Activated CD4-positive, alpha-beta T cell treated with anti-CD3 and anti-CD28 coated beads, Interleukin-2, amount 10 ng/mL, durations not matched to agents 24 days and 14 days (primary cell): ENCODE measurements at regions of chr6 and their contacts with region 1.

Region 1: DNA sequence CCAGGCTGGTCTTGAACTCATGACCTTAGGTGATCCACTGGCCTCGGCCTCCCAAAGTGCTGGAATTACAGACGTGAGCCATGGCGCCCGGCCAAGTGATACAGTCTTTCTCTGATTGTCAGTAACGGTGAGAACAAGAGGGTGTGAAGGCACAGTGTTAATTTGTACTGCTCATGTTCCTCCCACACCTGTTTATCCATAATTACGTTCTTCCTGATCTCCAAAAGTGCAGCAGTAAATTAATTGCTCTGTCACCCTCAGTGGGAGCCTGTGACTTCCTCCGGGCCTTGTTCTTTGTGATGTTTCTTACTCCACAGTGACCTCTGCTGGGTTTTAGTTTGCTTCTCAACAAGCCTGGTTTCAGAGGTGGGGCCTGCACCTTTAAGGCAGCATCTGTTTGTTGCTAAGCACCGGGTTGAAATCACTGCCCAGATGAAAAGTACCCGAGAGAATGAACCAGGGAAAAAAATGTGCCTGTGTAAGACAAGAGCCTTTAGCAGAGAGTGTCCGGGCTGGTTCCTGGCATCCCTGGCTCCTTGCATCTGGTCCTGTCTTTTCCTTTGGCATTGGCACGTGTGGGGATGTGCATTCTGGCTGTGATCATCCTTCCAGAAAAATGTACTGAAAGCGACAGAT is 89.1 kb upstream of the CLDN20 start:
- DNase-seq: peak; percentile 92
- H3K4me3 Mint-ChIP-seq: peak overlapping the region; percentile 17
- H3K27ac Mint-ChIP-seq: peak overlapping the region; percentile 88
- H3K4me1 Mint-ChIP-seq: peaks cover 42% of the 10 kb centered on the region
- H3K27me3 Mint-ChIP-seq: peaks cover 2% of the 10 kb centered on the region

Region 2: GRCh38 chr6:154675602-154676088 is 499.0 kb before region 1 on chr6:
- intact Hi-C with region 1: loop called (anchors 2 kb)
- DNase-seq: peak; percentile 96
- H3K4me3 Mint-ChIP-seq: no peak overlapping the region
- H3K27ac Mint-ChIP-seq: no peak overlapping the region
- H3K4me1 Mint-ChIP-seq: no peaks in the 10 kb centered on the region
- H3K27me3 Mint-ChIP-seq: peaks cover 2% of the 10 kb centered on the region

Region 3: DNA sequence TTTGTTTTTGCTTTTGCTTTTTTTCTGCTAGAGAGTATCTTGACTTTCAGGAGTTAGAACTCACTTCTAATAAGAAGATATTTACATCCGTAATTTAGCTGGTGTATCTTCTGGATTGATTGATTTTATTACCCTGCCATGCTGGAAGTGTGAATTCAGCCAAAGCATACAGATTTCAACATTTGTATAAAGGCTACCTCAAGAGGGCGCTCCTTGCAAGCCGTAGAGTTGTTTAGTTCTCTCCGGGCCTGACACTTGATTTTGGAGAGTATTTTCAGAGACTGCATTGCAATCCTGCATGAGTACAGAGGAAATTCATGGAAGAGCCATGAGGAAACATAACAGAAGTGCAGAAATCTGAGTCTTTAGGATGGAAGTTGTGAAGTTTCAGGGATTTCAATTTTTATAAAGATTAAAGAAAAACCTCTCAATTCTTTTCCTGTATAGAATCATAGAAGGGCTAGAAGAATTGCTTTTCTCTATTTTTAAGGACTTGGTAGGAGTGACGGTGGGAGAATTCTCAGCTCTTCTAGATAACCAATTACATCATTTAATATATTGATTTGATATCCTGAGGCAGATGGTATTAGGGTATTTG is 246.3 kb before region 1 on chr6:
- intact Hi-C with region 1: loop called (anchors 1 kb)
- DNase-seq: peak; percentile 90
- H3K4me3 Mint-ChIP-seq: no peak overlapping the region
- H3K27ac Mint-ChIP-seq: peak overlapping the region; percentile 12
- H3K4me1 Mint-ChIP-seq: peaks cover 19% of the 10 kb centered on the region
- H3K27me3 Mint-ChIP-seq: no peaks in the 10 kb centered on the region

Region 4: GRCh38 chr6:155001482-155001881 is 173.2 kb before region 1 on chr6:
- intact Hi-C with region 1: no loop called
- DNase-seq: no peak
- H3K4me3 Mint-ChIP-seq: no peak overlapping the region
- H3K27ac Mint-ChIP-seq: no peak overlapping the region
- H3K4me1 Mint-ChIP-seq: peaks cover 12% of the 10 kb centered on the region
- H3K27me3 Mint-ChIP-seq: peaks cover 12% of the 10 kb centered on the region

Region 5: GRCh38 chr6:155079985-155080452 is 94.7 kb before region 1 on chr6:
- intact Hi-C with region 1: loop called (anchors 1 kb)
- DNase-seq: no peak
- H3K4me3 Mint-ChIP-seq: peak overlapping the region; percentile 22
- H3K27ac Mint-ChIP-seq: peak overlapping the region; percentile 85
- H3K4me1 Mint-ChIP-seq: peaks cover 31% of the 10 kb centered on the region
- H3K27me3 Mint-ChIP-seq: no peaks in the 10 kb centered on the region

Region 6: DNA sequence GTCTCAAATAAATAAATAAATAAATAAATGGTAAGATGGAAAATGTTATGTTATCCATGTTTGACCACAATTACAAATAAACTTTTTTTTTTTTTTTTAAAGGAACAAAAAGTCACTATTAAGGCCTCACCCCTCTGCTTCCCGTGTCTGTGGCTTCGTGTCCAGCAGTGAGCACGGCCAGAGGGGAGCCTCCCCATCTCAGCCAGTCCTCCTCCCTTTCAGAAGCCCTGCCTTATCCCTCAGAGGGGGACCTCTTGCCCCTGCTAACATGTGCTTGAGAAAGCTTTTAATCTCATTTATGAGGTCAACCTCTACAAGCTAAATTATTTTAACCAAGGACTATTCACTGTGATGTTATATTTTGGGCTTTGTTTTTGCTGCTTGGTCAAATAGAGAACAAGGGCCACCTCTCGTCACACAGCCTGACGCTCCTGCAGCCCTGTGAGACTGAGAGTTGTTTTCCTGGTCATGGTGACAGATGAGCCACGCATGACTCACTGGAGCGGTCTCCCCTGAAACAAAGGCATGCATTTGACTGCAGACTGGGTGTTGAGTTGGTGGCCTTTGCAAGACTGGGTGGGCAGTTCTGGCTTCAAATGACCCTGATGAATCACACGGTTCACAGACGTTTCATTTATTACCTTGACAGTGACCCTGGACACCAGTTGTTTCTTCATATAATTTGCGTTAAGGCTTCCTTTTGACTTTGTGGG is 47.8 kb before region 1 on chr6:
- intact Hi-C with region 1: loop called (anchors 1 kb)
- DNase-seq: peak; percentile 72
- H3K4me3 Mint-ChIP-seq: peak overlapping the region; percentile 68
- H3K27ac Mint-ChIP-seq: peak overlapping the region; percentile 97
- H3K4me1 Mint-ChIP-seq: peaks cover 51% of the 10 kb centered on the region
- H3K27me3 Mint-ChIP-seq: no peaks in the 10 kb centered on the region

Region 7: GRCh38 chr6:155141002-155141401 is 33.7 kb before region 1 on chr6:
- intact Hi-C with region 1: no loop called
- DNase-seq: no peak
- H3K4me3 Mint-ChIP-seq: no peak overlapping the region
- H3K27ac Mint-ChIP-seq: peak overlapping the region; percentile 10
- H3K4me1 Mint-ChIP-seq: peaks cover 38% of the 10 kb centered on the region
- H3K27me3 Mint-ChIP-seq: no peaks in the 10 kb centered on the region

Region 8: DNA sequence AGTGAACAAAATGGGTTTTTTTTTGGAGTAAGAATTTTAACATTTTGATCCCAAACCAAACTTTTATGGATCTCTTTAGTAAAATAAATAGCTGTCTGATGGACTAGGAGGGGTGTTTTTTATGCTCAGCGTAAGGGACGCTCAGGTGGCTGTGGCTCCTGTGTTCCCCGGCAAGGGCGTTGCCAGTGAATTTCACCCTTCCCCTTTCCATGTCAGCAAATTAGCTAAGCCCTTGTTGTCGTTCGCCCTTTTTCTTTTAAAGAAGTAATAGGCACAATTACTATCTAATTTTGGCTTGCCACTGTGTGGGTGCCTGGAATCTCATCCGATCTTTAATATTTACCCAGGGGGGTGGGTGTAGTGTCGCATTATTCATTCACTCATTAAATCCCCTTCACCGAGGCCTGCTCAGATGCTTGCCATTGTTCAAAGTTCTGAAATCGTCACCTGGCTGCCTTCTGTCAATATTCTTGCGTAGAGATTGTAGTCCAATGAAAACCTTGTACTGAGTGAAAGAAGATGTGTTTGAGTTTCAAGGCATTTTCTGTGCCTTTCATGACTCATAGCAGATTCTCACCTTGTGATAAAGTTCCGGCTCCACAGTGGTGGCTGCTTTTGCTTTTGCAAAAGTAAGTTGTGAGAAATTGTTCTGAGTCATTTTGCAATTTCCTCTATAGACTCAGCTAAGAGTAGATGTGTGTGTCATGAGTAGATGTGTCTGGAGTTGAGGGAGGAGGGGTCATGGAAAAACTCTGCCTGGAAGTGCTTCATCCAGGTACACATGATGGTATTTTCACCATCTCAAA is 49.2 kb after region 1 on chr6:
- intact Hi-C with region 1: loop called (anchors 1 kb)
- DNase-seq: peak; percentile 85
- H3K4me3 Mint-ChIP-seq: peak overlapping the region; percentile 56
- H3K27ac Mint-ChIP-seq: peak overlapping the region; percentile 77
- H3K4me1 Mint-ChIP-seq: peaks cover 25% of the 10 kb centered on the region
- H3K27me3 Mint-ChIP-seq: no peaks in the 10 kb centered on the region

Region 9: DNA sequence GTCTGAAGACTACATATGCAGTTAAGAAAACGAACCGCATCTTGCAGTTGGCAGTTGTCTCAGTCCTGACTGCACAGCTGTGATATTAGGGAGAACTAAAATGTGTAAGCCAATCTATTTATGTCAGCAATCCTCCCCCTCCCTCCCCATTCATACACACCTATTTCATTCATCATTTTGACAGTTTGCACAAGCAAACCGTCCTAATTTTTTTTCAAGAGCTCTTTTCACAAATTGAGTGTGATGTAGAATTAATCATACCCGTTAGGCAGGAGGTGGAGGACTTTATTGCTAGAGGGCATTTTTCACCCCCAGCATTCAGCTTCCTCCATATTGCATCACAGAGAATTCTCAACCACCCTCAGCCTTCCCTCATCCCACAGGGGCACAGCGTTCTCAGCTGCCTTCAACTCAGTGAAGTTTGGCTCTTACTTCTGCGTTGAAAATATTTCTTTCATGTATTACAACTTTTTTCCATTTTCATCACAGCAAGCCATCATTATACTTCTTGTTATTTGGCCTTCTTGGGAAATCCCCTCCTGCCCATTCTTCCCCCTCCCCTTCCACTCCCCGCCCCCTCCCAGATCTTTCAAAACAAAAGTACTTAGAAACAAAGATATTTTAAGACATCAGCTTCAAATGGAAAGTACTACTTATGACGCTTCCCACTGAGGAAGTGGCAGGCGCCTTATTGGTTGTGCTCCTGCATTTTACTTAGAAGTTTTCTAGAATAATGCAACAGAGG is 243.5 kb after region 1 on chr6:
- intact Hi-C with region 1: loop called (anchors 5 kb)
- DNase-seq: peak; percentile 85
- H3K4me3 Mint-ChIP-seq: peak overlapping the region; percentile 82
- H3K27ac Mint-ChIP-seq: peak overlapping the region; percentile 100
- H3K4me1 Mint-ChIP-seq: peaks cover 37% of the 10 kb centered on the region
- H3K27me3 Mint-ChIP-seq: no peaks in the 10 kb centered on the region